IMR-90 (cell line): ENCODE measurements at regions of chr19 and their contacts with region 1.

Region 1: DNA sequence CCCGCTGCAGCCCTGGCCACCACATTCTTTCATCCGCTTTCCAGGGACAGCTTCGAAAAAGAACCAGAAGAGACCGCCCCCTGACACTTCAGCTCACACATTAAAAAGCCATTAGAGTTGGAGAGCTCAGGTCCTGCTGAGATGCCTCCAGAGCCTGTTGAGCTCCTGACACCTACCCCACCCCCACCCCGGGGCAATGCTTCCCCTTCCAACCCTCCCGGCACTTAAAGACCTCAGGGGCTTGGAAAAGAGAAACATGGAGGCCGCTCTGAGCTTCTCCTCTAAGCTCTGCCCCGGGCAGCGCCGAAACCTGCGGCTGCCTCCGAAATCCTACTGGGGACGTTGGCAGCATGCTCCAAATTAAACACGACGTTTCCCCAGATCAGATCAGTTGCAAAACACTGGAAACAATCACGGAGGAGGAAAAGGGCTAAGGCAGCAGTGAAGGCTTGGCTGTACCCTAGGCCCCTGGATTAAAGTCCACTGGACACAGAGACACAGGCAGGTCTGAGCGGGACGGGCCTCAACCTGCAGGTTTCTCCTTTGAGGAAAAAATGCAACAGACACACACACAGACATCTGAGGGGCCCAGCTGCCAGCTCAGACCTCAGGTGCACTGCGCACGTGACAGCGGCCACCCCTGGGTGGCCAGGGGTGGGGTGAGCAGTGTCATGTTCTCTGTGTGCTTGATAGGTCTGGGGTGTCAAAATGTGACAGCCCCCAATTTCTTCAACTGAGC is 9.6 kb downstream of the SH3GL1 start:
- DNase-seq: no peak
- ATAC-seq: peak; percentile 6
- H3K4me3 ChIP-seq: no peak overlapping the region
- H3K27ac ChIP-seq: peak overlapping the region; percentile 36
- H3K4me1 ChIP-seq: peaks cover 51% of the 10 kb centered on the region
- H3K27me3 ChIP-seq: no peaks in the 10 kb centered on the region
- CTCF ChIP-seq: no peak
- POLR2A ChIP-seq: no peak
- RAD21 ChIP-seq: no peak

Region 2: GRCh38 chr19:4375164-4376027 is 15.3 kb before region 1 on chr19:
- CTCF ChIA-PET with region 1: interaction called, 4 read pairs
- POLR2A ChIA-PET with region 1: no interaction called
- dilution Hi-C with region 1: no loop called
- in situ Hi-C with region 1: no loop called
- intact Hi-C with region 1: loop called (anchors 2 kb)
- DNase-seq: peak; percentile 81
- ATAC-seq: peak; percentile 53
- H3K4me3 ChIP-seq: no peak overlapping the region
- H3K27ac ChIP-seq: peak overlapping the region; percentile 90
- H3K4me1 ChIP-seq: peaks cover 56% of the 10 kb centered on the region
- H3K27me3 ChIP-seq: no peaks in the 10 kb centered on the region
- CTCF ChIP-seq: peak; percentile 69
- POLR2A ChIP-seq: no peak
- RAD21 ChIP-seq: peak; percentile 48

Region 3: DNA sequence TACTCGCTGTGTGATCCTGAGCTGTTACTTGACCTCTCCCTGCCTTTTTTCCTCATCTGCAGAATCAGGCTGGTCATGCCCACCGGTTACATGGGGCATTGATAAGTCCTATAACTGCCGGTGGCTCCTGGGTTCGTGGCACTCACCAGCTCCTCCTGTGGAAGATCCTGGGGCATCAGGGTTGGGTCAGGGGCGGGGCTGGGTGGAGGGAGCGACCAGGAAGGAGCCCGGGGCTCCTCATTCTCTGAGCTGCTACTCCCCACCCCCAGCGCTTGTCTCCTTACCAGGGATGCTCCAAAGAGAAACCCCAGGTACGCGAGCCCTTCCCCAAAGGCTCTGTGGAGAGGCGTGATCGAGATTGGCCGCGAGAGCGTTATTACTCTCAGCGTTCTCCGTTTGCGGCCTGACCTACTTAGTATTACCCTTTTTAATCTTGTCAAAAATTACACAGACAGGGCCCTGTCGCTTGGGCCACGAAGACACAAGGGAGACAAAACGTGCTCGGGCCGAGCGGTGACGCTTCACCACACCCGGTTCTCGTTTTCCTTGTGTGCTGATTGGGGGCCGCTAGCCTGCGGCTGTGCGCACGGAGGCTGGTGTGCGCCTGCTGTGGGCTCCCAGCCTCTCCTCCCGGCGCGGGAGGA is 92.1 kb after region 1 on chr19:
- CTCF ChIA-PET with region 1: no interaction called
- POLR2A ChIA-PET with region 1: no interaction called
- dilution Hi-C with region 1: no loop called
- in situ Hi-C with region 1: no loop called
- intact Hi-C with region 1: no loop called
- DNase-seq: no peak
- ATAC-seq: no peak
- H3K4me3 ChIP-seq: no peak overlapping the region
- H3K27ac ChIP-seq: no peak overlapping the region
- H3K4me1 ChIP-seq: no peaks in the 10 kb centered on the region
- H3K27me3 ChIP-seq: no peaks in the 10 kb centered on the region
- CTCF ChIP-seq: no peak
- POLR2A ChIP-seq: no peak
- RAD21 ChIP-seq: no peak

Region 4: DNA sequence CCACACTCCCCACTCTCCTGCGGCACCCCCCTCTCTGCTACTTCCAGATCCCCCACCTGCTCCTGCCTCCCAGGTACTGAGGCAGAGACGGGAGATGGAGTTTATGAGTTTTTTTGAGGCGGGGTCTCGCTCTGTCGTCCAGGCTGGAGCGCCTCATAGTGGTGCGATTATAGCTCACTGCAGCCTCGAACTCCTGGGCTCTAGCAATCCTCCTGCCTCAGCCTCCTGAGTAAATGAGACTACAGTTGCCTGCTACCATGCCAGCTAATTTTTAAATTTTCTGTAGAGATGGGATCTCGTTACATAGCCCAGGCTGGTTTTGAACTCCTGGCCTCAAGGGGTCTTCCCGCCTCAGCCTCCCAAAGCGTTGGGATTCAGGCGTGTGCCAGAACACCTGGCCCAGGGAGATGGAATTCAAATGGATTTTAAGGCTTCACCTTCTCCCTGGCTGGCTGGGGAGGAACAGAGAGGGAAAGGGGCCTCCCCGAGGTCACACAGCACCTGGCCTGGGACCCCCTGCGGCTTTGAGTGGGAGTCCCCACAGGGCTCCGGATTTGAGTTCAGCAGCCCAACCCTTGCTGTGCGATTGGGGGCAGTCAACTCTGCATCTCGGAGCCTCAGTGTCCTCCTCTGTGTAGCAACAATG is 229.1 kb after region 1 on chr19:
- CTCF ChIA-PET with region 1: no interaction called
- POLR2A ChIA-PET with region 1: no interaction called
- dilution Hi-C with region 1: no loop called
- in situ Hi-C with region 1: no loop called
- intact Hi-C with region 1: no loop called
- DNase-seq: no peak
- ATAC-seq: no peak
- H3K4me3 ChIP-seq: no peak overlapping the region
- H3K27ac ChIP-seq: no peak overlapping the region
- H3K4me1 ChIP-seq: no peaks in the 10 kb centered on the region
- H3K27me3 ChIP-seq: peaks cover 35% of the 10 kb centered on the region
- CTCF ChIP-seq: no peak
- POLR2A ChIP-seq: no peak
- RAD21 ChIP-seq: no peak